Ascending aorta (tissue), 2 donors: ENCODE measurements at regions of chr17 and their contacts with region 1.

Region 1: GRCh38 chr17:69574257-69575197 is 160.0 kb downstream of the MAP2K6 start:
- DNase-seq: no peak
- H3K4me3 ChIP-seq: no peak overlapping the region
- H3K27ac ChIP-seq: peak overlapping the region in 1 of 2 donors; percentile 22
- H3K4me1 ChIP-seq: peaks cover 0 to 17% of the 10 kb centered on the region in 2 donors
- H3K27me3 ChIP-seq: no peaks in the 10 kb centered on the region
- CTCF ChIP-seq: no peak

Region 2: GRCh38 chr17:69511250-69511649 is 63.3 kb before region 1 on chr17:
- intact Hi-C with region 1: no loop called
- DNase-seq: no peak
- H3K4me3 ChIP-seq: no peak overlapping the region
- H3K27ac ChIP-seq: no peak overlapping the region
- H3K4me1 ChIP-seq: no peaks in the 10 kb centered on the region
- H3K27me3 ChIP-seq: no peaks in the 10 kb centered on the region
- CTCF ChIP-seq: no peak

Region 3: GRCh38 chr17:69607162-69607834 is 32.8 kb after region 1 on chr17:
- intact Hi-C with region 1: loop called (anchors 2 kb)
- DNase-seq: peak in 1 of 2 donors; percentile 86
- H3K4me3 ChIP-seq: no peak overlapping the region
- H3K27ac ChIP-seq: peak overlapping the region; percentile 32 to 71
- H3K4me1 ChIP-seq: peaks cover 0 to 23% of the 10 kb centered on the region in 2 donors
- H3K27me3 ChIP-seq: no peaks in the 10 kb centered on the region
- CTCF ChIP-seq: peak; percentile 72 to 82 (median 79)

Region 4: DNA sequence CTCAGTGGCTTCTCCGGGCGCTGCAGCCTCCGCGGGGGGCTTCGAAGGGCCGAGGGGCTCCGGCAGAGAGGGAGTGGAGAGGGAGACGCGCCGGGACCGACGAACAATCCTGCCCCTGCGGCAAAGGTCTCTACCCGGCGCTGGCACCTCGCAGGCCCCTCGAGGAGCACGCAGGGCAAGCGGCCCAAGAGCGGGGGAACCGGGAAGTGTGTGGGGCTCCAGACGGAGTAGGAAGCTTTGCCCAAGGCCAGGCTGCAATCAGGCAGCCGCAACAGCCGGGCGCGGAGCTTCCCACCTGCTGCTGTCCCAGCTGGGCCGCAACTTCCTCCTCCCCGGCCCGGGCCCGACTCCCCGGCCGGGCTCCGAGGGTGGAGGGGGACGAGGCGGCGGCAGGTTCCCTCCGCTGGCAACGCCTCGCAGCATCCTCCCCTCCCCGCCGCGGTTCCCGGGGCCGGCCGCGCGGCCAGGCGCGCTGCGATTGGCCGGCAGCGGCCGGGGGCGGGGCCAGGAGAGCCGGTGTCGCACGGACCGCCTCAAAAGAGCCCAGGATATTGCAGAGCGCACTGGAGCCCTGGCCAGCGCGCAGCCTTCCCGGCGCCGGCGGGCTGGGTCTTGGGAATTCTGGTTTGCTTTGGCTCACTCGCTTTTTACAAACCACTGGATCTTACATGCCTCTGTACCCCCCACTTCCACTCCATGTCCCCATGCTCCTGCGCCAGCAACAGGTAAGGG is 594.6 kb after region 1 on chr17 and contains the start of gene KCNJ2:
- intact Hi-C with region 1: loop called (anchors 2 kb)
- DNase-seq: peak; percentile 19 to 88
- H3K4me3 ChIP-seq: peak within 1 kb of the TSS; percentile 66 to 76
- H3K27ac ChIP-seq: peak within 1 kb of the TSS; percentile 64 to 77
- H3K4me1 ChIP-seq: peaks cover 0 to 11% of the 10 kb centered on the region in 2 donors
- H3K27me3 ChIP-seq: no peaks in the 10 kb centered on the region
- CTCF ChIP-seq: no peak
- total RNA-seq, gene KCNJ2: 7.5 TPM